A549 (cell line): ENCODE measurements at regions of chr17 and their contacts with region 1.

Region 1: DNA sequence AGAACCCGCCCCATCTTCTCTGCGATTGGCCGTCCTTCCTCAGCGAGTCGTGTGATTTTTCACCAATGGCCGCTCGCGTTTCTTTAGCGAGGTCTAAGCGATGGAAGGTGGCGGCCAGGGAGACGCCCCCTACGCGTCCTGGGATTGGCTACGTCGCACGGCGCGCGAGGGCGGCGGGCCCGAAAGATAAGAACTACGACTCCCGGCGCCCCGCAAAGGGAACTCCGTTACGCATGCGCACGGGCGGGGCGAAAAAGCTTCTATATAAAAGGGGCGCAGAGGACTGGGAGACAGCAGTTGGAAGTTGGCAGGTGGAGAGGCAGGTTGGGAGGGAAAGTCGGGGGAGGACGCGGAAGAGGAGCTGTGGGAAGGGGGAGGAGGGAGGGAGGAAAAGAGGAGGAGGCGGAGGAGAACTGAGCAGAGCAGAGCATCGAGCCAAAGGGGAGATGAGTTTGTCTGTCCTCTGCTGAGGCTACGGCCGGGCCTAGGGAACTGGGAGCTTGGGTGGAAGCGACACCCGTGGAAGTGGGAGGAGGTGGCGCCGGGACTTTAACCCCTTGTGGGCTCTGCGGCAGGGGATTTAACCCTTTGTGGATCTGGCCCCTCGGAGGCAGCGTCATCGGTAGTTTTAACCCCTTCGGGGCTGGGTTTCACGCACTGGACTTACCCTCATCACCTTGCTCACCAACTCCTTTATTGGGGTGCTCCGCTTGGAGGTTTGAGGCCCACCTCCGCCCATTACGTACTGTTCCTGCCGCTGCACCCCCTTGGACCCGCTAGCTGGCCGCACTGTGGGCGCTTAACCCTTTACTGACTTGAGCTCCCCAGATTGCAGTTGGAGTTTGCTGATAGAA is at the start of gene HEXIM1:
- DNase-seq: peak; percentile 99 to 100
- ATAC-seq: peak; percentile 74 to 86
- H3K4me3 ChIP-seq: peak within 1 kb of the TSS; percentile 74
- H3K27ac ChIP-seq: peak within 1 kb of the TSS; percentile 97 to 98
- H3K4me1 ChIP-seq: peaks cover 27% of the 10 kb centered on the region
- CTCF ChIP-seq: no peak
- EP300 ChIP-seq: no peak
- POLR2A ChIP-seq: peak; percentile 100
- RAD21 ChIP-seq: peak in 1 of 2 experiments; percentile 7; a peak in 1 of 5 replicates
- polyA plus RNA-seq, gene HEXIM1: 39.3 and 54.0 TPM in 2 replicates

Region 2: DNA sequence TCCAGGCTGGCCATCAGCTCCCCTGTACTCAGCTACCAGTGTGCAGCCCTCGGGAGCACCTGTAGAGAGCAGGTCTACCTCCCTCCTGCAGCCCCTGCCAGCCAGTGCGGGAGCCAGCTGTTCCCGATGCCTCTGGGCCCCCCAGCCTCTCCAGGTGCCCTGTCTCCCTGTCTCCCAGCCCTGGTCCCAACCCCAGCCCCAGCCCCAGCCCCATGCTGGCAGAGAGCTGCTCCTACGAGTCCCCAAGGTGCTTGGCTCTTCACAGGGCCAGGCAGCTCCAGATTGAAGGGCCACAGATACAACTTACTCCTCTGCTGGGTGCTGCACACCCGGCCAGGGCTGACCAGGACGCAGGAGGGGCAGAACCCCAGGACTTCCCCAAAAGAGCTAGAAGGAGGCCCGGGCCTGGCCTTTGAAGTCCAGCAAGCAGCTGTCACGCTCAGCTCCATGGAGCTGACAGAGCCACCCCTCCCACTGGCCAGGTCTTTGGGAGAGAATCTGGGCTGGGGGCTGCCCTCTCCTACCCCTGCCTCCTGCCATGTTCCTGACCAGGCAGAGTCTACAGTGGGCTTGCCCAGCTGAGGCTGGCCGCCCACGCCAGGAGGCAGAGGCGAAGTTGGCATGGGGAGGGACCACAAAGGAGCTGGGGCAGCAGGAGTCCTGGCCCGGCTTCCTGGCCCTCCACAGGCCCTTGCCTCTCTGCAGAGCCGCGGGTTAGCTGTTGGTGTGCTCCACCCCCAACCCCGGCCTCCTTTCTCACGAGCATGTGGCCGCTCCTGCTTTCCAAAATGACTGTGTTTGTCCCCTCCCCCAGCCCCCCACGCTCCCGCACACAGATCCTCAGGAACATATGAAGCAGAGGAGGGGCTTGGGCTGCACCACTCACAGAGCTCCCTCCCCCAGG is 399.1 kb before region 1 on chr17:
- CTCF ChIA-PET with region 1: no interaction called
- POLR2A ChIA-PET with region 1: no interaction called
- DNase-seq: no peak
- ATAC-seq: peak in 1 of 2 experiments; percentile 14; a peak in 2 of 6 replicates
- H3K4me3 ChIP-seq: no peak overlapping the region
- H3K27ac ChIP-seq: no peak overlapping the region
- H3K4me1 ChIP-seq: no peaks in the 10 kb centered on the region
- CTCF ChIP-seq: no peak
- EP300 ChIP-seq: no peak
- POLR2A ChIP-seq: no peak
- RAD21 ChIP-seq: no peak

Region 3: GRCh38 chr17:45060797-45061605 is 87.4 kb before region 1 on chr17 and contains the start of gene NMT1:
- CTCF ChIA-PET with region 1: interaction called, 4 read pairs
- POLR2A ChIA-PET with region 1: interaction called, 15 read pairs
- DNase-seq: peak; percentile 99 to 100
- ATAC-seq: peak; percentile 97
- H3K4me3 ChIP-seq: peak within 1 kb of the TSS; percentile 67
- H3K27ac ChIP-seq: peak within 1 kb of the TSS; percentile 87 to 91
- H3K4me1 ChIP-seq: peaks cover 16% of the 10 kb centered on the region
- CTCF ChIP-seq: no peak
- EP300 ChIP-seq: no peak
- POLR2A ChIP-seq: peak; percentile 91
- RAD21 ChIP-seq: no peak
- polyA plus RNA-seq, gene NMT1: 82.9 and 95.8 TPM in 2 replicates

Region 4: DNA sequence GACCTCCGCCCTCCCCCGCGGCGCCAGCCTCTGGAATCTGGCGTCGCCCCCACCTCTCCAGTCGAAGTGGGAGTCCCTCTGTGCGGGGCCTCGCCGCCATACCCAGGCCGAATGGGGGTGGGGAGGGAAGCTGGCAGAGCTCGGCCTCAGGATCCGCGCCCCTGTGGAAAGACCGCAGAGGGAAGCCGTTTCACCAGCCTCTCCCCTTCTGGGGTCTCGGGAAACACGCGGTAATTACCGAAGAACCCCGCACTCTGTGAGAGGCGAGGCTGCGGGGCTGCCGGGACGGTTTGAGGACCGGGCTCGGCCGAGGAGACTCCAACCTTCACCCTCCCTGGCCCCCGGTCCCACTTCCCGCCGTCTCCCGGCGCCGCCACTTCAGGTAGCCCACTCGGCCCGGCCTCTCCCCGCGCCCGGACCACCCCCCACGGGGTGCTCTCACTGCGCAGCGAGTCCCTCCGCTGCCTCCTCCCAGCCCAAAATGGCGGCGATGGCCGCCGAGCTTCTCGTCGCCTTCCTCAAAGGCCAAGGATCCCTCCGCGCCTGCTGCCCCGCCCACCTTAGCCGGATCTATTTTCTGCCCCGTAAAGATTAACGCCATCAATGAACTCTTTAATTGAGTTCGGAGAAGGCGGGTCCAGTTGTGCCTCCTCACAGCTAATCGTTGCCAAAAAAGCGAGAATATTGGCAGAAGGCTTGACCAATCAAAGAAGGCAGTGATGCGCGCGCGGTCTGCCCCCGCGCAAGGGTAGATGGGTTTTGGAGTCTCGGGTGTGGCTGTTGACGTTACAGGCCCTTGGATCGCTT is 12.8 kb after region 1 on chr17:
- CTCF ChIA-PET with region 1: interaction called, 540 read pairs
- POLR2A ChIA-PET with region 1: interaction called, 404 read pairs
- DNase-seq: peak; percentile 98 to 100
- ATAC-seq: peak; percentile 95 to 96
- H3K4me3 ChIP-seq: peak overlapping the region; percentile 81
- H3K27ac ChIP-seq: peak overlapping the region; percentile 98 to 99
- H3K4me1 ChIP-seq: peaks cover 39% of the 10 kb centered on the region
- CTCF ChIP-seq: no peak; the same call in 1 of the 3 replicates
- EP300 ChIP-seq: no peak
- POLR2A ChIP-seq: peak; percentile 48
- RAD21 ChIP-seq: no peak; a peak in 2 of 5 replicates

Region 5: GRCh38 chr17:45190503-45191255 is 42.3 kb after region 1 on chr17:
- CTCF ChIA-PET with region 1: interaction called, 2,147 read pairs
- POLR2A ChIA-PET with region 1: interaction called, 352 read pairs
- DNase-seq: no peak
- ATAC-seq: peak in 1 of 2 experiments; percentile 52; a peak in 1 of 6 replicates
- H3K4me3 ChIP-seq: no peak overlapping the region
- H3K27ac ChIP-seq: peak overlapping the region; percentile 58 to 86
- H3K4me1 ChIP-seq: peaks cover 48% of the 10 kb centered on the region
- CTCF ChIP-seq: no peak
- EP300 ChIP-seq: no peak
- POLR2A ChIP-seq: no peak
- RAD21 ChIP-seq: no peak

Region 6: DNA sequence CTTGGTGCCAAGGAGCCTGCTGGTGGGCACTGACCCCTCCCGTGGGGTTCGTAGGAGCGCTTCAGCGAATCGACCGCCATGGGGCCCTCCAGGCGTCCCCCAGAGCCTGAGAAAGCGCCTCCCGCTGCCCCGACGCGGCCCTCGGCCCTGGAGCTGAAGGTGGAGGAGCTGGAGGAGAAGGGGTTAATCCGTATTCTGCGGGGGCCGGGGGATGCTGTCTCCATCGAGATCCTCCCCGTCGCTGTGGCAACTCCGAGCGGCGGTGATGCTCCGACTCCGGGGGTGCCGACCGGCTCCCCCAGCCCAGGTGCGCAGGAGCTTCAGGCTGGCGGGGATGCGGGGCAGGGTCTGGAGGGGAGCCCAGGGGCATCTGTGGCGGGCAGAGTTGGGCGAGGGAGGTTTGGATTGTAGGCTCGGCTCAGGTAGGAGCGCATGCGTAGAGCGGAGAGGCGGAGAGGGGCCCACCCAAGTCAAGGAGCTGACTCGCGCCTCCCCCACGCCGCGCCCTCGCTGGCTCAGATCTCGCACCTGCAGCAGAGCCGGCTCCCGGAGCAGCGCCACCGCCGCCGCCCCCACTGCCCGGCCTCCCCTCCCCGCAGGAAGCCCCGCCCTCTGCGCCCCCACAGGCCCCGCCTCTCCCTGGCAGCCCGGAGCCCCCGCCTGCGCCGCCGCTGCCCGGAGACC is 93.1 kb after region 1 on chr17:
- CTCF ChIA-PET with region 1: interaction called, 2,147 read pairs
- POLR2A ChIA-PET with region 1: interaction called, 13 read pairs
- DNase-seq: no peak
- ATAC-seq: no peak
- H3K4me3 ChIP-seq: no peak overlapping the region
- H3K27ac ChIP-seq: no peak overlapping the region; a peak in 1 of 6 replicates
- H3K4me1 ChIP-seq: peaks cover 13% of the 10 kb centered on the region
- CTCF ChIP-seq: no peak
- EP300 ChIP-seq: no peak
- POLR2A ChIP-seq: no peak
- RAD21 ChIP-seq: no peak

Region 7: GRCh38 chr17:45371414-45372327 is 223.3 kb after region 1 on chr17:
- CTCF ChIA-PET with region 1: no interaction called
- POLR2A ChIA-PET with region 1: interaction called, 30 read pairs
- DNase-seq: peak; percentile 98
- ATAC-seq: peak; percentile 93 to 95
- H3K4me3 ChIP-seq: no peak overlapping the region; the same call in 2 of the 3 replicates
- H3K27ac ChIP-seq: peak overlapping the region; percentile 95 to 97
- H3K4me1 ChIP-seq: peaks cover 84% of the 10 kb centered on the region
- CTCF ChIP-seq: no peak; the same call in 1 of the 3 replicates
- EP300 ChIP-seq: peak; percentile 97 to 99
- POLR2A ChIP-seq: no peak; the same call in 1 of the 2 replicates
- RAD21 ChIP-seq: peak; percentile 44 to 71; a peak in 4 of 5 replicates